ENCODE measurements at regions of chr6 and their contacts with region 1.

Region 1: GRCh38 chr6:73732845-73733675 is 37.1 kb downstream of the CD109 start:
- DNase-seq: peak; percentile 39 to 77
- H3K4me3 ChIP-seq: no peak overlapping the region
- H3K27ac ChIP-seq: no peak overlapping the region
- H3K4me1 ChIP-seq: peaks cover 0 to 3% (median 0%) of the 10 kb centered on the region in 4 donors
- H3K27me3 ChIP-seq: no peaks in the 10 kb centered on the region
- CTCF ChIP-seq: peak; percentile 78 to 87

Region 2: DNA sequence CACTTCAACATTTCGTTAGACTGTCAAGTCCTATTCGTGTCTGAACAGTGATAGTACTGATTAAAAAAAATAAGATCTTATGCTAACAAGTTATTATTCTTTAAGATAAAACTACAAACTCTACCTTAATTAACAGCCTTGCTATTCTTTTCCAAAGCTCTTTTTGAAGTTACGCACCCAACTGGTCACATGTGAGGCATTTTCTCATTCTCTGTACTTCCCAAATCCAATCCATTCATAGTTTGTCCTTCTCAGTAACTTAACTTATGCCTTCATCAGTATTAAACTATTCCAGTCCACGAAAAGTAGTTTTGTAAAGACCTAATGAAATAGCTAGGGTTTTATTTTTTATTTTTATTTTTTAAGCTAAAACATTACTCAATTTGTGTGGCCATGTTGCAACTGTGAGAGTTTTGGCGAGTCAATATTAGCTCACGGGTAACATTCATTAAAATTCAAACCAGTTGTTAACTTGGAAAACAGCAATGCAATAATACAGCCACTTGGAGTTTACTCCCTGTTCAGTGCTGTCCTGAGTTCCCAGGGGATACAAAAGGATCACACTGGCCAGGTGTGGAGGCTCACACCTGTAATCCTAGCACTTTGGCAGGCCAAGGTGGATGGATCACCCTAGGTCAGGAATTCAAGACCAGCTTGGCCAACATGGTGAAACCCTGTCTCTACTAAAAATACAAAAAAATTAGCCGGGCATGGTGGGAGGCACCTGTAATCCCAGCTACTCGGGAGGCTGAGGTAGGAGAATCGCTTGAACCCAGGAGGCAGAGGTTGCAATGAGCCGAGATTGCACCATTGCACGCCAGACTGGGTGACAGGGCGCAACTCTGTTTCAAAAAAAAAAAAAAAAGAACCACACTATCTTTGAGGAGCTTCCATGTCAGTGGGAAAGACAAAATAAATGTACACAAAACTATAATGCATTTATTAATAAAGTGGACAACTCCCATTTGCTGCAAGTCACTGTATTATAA is 184.3 kb before region 1 on chr6:
- intact Hi-C with region 1: no loop called
- DNase-seq: no peak
- H3K4me3 ChIP-seq: no peak overlapping the region
- H3K27ac ChIP-seq: no peak overlapping the region
- H3K4me1 ChIP-seq: no peaks in the 10 kb centered on the region
- H3K27me3 ChIP-seq: no peaks in the 10 kb centered on the region
- CTCF ChIP-seq: no peak

Region 3: GRCh38 chr6:73675466-73676098 is 57.5 kb before region 1 on chr6:
- intact Hi-C with region 1: loop called (anchors 5 kb)
- DNase-seq: peak; percentile 81 to 83
- H3K4me3 ChIP-seq: no peak overlapping the region
- H3K27ac ChIP-seq: no peak overlapping the region
- H3K4me1 ChIP-seq: no peaks in the 10 kb centered on the region
- H3K27me3 ChIP-seq: no peaks in the 10 kb centered on the region
- CTCF ChIP-seq: peak; percentile 87 to 88

Region 4: GRCh38 chr6:73782911-73783310 is 49.9 kb after region 1 on chr6:
- intact Hi-C with region 1: no loop called
- DNase-seq: no peak
- H3K4me3 ChIP-seq: no peak overlapping the region
- H3K27ac ChIP-seq: no peak overlapping the region
- H3K4me1 ChIP-seq: no peaks in the 10 kb centered on the region
- H3K27me3 ChIP-seq: no peaks in the 10 kb centered on the region
- CTCF ChIP-seq: no peak

Region 5: DNA sequence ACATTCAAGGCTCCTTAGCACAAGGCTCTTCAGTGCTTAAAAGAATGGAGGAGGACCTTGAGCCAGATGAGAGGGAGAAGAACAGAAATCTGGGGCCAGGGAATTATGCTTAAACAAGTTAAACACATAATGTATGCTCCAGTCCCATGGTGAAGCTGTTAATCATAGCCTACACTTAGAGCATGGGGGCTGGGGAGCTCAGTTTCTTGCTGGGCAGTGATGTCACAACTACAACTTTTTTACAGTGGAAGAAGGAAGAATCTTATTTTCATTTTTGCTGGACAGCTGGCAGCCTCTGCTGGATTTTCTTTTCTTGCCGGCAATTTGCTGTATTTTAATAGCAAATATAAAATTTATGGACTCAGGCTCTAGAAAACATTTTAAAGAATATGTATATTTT is 395.5 kb after region 1 on chr6:
- intact Hi-C with region 1: no loop called
- DNase-seq: no peak
- H3K4me3 ChIP-seq: no peak overlapping the region
- H3K27ac ChIP-seq: no peak overlapping the region
- H3K4me1 ChIP-seq: no peaks in the 10 kb centered on the region
- H3K27me3 ChIP-seq: no peaks in the 10 kb centered on the region
- CTCF ChIP-seq: no peak

Measured in tibial artery (tissue), 4 donors.